ENCODE measurements at regions of chr12 and their contacts with region 1.

Region 1: DNA sequence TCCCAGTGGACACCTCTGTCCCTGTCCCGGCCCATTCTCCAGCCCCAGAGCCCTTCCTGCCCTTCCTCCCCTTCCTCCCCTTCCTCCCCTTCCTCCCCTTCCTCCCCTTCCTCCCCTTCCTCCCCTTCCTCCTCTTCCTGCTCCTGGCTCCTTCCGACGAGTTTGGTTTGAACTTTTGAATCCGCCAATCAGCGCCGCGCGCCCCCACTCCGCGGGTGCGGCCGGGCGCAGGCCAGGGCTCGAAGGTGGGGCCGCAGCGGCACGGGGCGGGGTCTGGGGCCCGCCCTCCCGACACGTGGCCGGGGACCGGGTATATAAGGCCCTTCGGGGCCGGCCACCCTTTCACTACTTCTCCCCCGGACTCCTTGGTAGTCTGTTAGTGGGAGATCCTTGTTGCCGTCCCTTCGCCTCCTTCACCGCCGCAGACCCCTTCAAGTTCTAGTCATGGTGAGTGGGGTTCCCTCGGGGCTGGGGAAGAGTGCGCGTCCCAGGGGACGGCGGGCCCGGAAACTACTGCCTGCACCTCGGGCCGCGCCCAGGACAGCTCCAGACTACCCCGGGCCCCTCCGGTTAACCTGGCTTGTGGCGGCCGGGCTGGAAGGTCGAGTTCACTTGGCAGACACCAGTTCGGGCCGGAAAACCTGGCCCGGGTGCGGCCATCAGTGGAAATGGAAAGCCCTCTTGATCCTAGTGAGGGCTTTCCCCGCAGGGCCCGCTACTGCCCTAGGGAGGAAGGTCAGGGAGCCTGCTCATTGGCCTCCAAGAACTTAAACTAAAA is at the start of gene TUBA1C:
- DNase-seq: no peak
- H3K4me3 ChIP-seq: peak within 1 kb of the TSS; percentile 94
- CTCF ChIP-seq: no peak

Region 2: GRCh38 chr12:48873096-48873495 is 391.8 kb before region 1 on chr12:
- CTCF ChIA-PET with region 1: no interaction called
- POLR2A ChIA-PET with region 1: no interaction called
- DNase-seq: no peak
- H3K4me3 ChIP-seq: no peak overlapping the region
- CTCF ChIP-seq: no peak

Region 3: DNA sequence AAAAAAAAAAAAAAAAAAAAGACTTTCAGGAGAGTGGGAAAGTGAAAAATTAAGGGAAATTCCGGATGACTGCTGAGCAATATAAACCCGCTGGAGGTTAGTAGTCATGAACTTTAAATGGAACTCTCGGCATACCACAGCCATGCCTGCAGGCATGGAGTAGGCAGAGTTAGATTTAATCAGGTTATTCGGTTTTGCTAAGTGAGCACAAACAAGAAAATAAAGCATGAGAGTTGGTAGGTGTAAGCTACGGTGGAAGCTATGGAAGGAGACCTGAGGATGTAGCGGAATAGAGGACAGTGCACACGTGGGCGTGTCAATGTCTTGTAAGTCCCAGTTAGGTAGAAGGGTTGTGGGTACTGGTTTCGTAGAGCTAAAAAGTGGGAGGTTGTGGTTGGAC is 11.8 kb before region 1 on chr12:
- CTCF ChIA-PET with region 1: interaction called, 11 read pairs
- POLR2A ChIA-PET with region 1: interaction called, 6 read pairs
- DNase-seq: no peak
- H3K4me3 ChIP-seq: no peak overlapping the region
- CTCF ChIP-seq: no peak

Region 4: DNA sequence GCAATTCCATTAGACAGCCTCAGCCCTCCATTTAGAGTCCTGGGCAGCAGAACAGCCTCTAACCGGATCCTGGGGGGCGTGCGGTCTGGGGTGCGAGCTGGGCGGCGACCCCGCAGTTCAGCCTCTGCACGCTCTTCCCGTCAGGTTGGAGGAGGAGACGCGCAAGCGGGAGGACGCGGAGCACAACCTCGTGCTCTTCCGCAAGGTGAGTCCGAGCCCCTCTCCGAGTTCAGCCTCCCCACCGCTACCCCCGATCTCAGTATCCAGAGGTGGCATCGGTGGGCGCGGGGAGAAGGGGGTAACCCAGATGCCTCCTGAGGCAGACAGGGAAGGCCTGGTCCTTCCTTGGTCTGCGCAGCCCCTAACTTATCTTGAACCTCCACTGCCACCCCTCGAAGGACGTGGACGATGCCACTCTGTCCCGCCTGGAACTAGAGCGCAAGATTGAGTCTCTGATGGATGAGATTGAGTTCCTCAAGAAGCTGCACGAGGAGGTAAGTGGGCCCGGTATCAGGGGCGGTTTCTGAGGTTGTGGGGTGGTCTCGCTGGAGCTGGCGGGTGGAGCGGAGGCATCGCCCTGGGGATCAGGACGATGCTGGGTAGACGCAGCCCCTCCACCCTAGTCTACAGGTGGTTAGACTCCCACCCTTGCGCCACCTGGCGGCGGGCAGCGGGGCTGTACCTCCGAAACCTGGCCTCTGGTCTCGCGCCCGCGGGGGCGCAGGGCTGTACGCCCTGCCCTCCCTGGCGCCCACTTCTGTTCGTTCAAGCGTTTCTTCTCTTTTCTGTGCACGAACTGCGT is 31.3 kb after region 1 on chr12:
- CTCF ChIA-PET with region 1: interaction called, 11 read pairs
- POLR2A ChIA-PET with region 1: no interaction called
- DNase-seq: no peak
- H3K4me3 ChIP-seq: no peak overlapping the region
- CTCF ChIP-seq: peak; percentile 74

Region 5: DNA sequence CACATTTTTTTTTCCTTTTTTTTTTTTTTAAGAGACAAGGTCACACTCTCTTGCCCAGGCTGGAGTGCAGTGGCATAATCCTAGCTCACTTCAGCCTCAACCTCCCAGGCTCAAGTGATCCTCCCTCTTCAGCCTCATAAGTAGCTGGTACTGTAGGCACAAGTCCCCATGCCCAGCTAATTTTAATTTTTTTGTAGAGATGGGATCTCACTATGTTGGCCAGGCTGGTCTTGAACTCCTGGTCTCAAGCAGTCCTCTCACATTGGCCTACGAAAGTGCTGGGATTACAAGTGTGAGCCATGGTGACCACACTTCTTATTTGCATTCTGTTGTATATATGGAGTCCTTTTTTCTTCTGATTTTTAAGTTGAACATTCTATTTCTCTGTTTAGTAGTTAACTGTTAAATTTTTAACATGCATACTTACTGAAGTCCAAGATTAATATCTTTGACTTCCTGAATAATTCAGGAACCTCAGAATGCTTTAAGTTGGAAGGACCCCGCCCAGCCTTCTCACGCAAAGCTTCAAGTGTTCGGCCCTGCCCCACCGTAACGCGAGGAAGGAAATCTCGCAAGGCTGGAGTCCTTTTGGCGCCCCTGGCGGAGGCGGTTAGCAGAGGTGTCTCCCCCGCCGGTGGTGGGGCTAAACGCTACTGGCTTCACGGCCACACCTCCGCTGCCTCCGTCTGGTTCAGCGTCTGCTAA is 123.9 kb after region 1 on chr12:
- CTCF ChIA-PET with region 1: no interaction called
- POLR2A ChIA-PET with region 1: no interaction called
- DNase-seq: no peak
- H3K4me3 ChIP-seq: no peak overlapping the region
- CTCF ChIP-seq: no peak